ENCODE measurements at regions of chr10 and their contacts with region 1.

Region 1: GRCh38 chr10:69318106-69318866 is 40.0 kb downstream of the HK1 start:
- DNase-seq: peak; percentile 92
- H3K4me3 Mint-ChIP-seq: peak overlapping the region; percentile 99
- H3K27ac Mint-ChIP-seq: peak overlapping the region; percentile 97
- H3K4me1 Mint-ChIP-seq: peaks cover 49% of the 10 kb centered on the region
- H3K27me3 Mint-ChIP-seq: no peaks in the 10 kb centered on the region

Region 2: GRCh38 chr10:69306421-69306820 is 11.9 kb before region 1 on chr10:
- CTCF ChIA-PET with region 1: interaction called, 10 read pairs
- POLR2A ChIA-PET with region 1: no interaction called
- DNase-seq: no peak
- H3K4me3 Mint-ChIP-seq: no peak overlapping the region
- H3K27ac Mint-ChIP-seq: no peak overlapping the region
- H3K4me1 Mint-ChIP-seq: no peaks in the 10 kb centered on the region
- H3K27me3 Mint-ChIP-seq: peaks cover 4% of the 10 kb centered on the region

Region 3: GRCh38 chr10:69340731-69341130 is 22.4 kb after region 1 on chr10:
- CTCF ChIA-PET with region 1: interaction called, 11 read pairs
- POLR2A ChIA-PET with region 1: no interaction called
- DNase-seq: no peak
- H3K4me3 Mint-ChIP-seq: no peak overlapping the region
- H3K27ac Mint-ChIP-seq: no peak overlapping the region
- H3K4me1 Mint-ChIP-seq: peaks cover 78% of the 10 kb centered on the region
- H3K27me3 Mint-ChIP-seq: no peaks in the 10 kb centered on the region

Measured in activated CD4-positive, alpha-beta T cell treated with anti-CD3 and anti-CD28 coated beads, Interleukin-2, amount 10 ng/mL, durations not matched to agents 7 days and 5 days (primary cell).